Activated naive CD4-positive, alpha-beta T cell treated with anti-CD3 and anti-CD28 coated beads for 36 hours (primary cell): ENCODE measurements at regions of chr5 and their contacts with region 1.

Region 1: DNA sequence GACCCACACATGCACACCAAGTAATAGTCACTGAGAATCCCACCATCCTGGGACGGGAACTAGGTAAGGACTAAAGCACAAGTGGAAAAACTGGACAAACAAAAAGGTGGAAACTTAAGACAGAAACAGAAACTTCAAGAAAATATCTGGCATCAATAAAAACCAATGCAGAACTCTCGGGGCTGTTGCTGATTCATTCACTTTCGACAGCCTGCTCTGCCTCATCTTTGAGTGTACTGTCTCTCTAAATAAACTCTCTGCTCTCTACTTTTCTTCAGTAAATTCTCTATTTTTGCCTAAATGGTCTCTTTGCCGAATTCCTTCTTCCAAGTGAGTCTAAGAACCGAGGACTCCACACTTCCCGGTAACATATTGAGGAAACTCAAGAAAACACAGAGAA is 116.9 kb downstream of the CDH9 start:
- DNase-seq: no peak
- H3K4me3 Mint-ChIP-seq: no peak overlapping the region
- H3K27ac Mint-ChIP-seq: no peak overlapping the region
- H3K4me1 Mint-ChIP-seq: no peaks in the 10 kb centered on the region
- H3K27me3 Mint-ChIP-seq: no peaks in the 10 kb centered on the region

Region 2: GRCh38 chr5:27026791-27027190 is 105.4 kb after region 1 on chr5:
- CTCF ChIA-PET with region 1: no interaction called
- intact Hi-C with region 1: no loop called
- DNase-seq: no peak
- H3K4me3 Mint-ChIP-seq: no peak overlapping the region
- H3K27ac Mint-ChIP-seq: no peak overlapping the region
- H3K4me1 Mint-ChIP-seq: no peaks in the 10 kb centered on the region
- H3K27me3 Mint-ChIP-seq: no peaks in the 10 kb centered on the region

Region 3: GRCh38 chr5:27639005-27639612 is 717.7 kb after region 1 on chr5:
- CTCF ChIA-PET with region 1: no interaction called
- intact Hi-C with region 1: no loop called
- DNase-seq: no peak
- H3K4me3 Mint-ChIP-seq: no peak overlapping the region
- H3K27ac Mint-ChIP-seq: no peak overlapping the region
- H3K4me1 Mint-ChIP-seq: no peaks in the 10 kb centered on the region
- H3K27me3 Mint-ChIP-seq: no peaks in the 10 kb centered on the region

Region 4: GRCh38 chr5:27708579-27708978 is 787.1 kb after region 1 on chr5:
- CTCF ChIA-PET with region 1: no interaction called
- intact Hi-C with region 1: loop called (anchors 10 kb)
- DNase-seq: no peak
- H3K4me3 Mint-ChIP-seq: no peak overlapping the region
- H3K27ac Mint-ChIP-seq: no peak overlapping the region
- H3K4me1 Mint-ChIP-seq: no peaks in the 10 kb centered on the region
- H3K27me3 Mint-ChIP-seq: no peaks in the 10 kb centered on the region